ENCODE measurements at regions of chr13 and their contacts with region 1.

Region 1: GRCh38 chr13:45340926-45341750 is at the start of gene TPT1:
- DNase-seq: peak; percentile 99 to 100 (median 99)
- H3K4me3 ChIP-seq: peak within 1 kb of the TSS; percentile 90 to 94
- H3K4me3 Mint-ChIP-seq: peak within 1 kb of the TSS; percentile 92 to 100 (median 98)
- H3K27ac ChIP-seq: peak within 1 kb of the TSS; percentile 100
- H3K27ac Mint-ChIP-seq: peak within 1 kb of the TSS; percentile 80 to 100 (median 100)
- H3K4me1 ChIP-seq: peaks cover 55% of the 10 kb centered on the region
- H3K4me1 Mint-ChIP-seq: peaks cover 37 to 68% (median 50%) of the 10 kb centered on the region in 4 donors
- H3K27me3 ChIP-seq: no peaks in the 10 kb centered on the region
- H3K27me3 Mint-ChIP-seq: peaks cover 0 to 3% of the 10 kb centered on the region in 2 donors
- total RNA-seq, gene TPT1: 10,578 to 11,080 TPM

Region 2: DNA sequence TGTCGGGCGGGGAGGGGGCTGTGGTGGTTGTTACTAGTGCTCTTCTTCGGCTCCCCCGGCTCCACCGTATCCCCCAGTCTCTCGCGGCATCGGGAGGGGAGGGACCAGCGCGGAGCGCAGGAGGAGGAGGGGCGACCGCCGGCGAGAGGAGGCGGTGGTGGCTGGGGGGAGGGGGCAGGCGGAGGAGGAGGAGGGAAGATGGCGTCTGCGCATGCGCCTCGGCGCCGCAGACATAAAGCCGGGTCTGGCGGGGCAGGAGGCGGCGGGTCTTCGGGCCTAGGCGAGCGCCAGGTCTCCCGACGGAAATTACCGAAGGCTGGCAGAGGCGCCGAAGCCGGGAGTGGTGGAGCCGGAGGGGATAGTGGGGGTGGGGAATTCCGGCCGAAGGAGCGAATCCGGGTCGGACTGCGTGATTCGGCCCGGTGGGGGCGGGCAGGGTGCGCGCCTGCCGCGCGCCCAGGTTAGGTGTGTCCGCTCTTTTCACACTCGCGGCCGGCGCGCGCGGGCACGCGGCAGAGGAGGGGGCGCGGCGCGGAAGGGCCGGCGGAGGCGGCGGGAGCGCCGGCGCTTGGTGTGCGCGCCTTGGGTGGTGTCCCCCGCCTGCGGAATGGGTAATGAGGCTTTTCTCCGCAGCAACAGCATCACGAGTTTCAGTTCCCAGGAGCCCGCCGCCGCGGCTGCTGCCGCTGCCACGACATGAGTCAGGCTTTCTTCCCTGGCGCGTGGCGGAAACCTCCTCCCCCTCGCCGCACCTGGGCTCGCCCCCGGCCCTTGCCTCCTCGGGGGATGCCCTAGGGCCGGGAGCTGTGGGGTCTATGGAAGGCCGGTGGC is 763.7 kb before region 1 on chr13:
- CTCF ChIA-PET with region 1: no interaction called
- POLR2A ChIA-PET with region 1: interaction called, 3 read pairs
- intact Hi-C with region 1: loop called (anchors 1 kb)
- DNase-seq: peak; percentile 93 to 96 (median 94)
- H3K4me3 ChIP-seq: peak overlapping the region; percentile 47 to 86
- H3K4me3 Mint-ChIP-seq: peak overlapping the region; percentile 88 to 97 (median 94)
- H3K27ac ChIP-seq: peak overlapping the region; percentile 84
- H3K27ac Mint-ChIP-seq: peak overlapping the region; percentile 91 to 97 (median 95)
- H3K4me1 ChIP-seq: peaks cover 39% of the 10 kb centered on the region
- H3K4me1 Mint-ChIP-seq: peaks cover 28 to 46% (median 38%) of the 10 kb centered on the region in 4 donors
- H3K27me3 ChIP-seq: no peaks in the 10 kb centered on the region
- H3K27me3 Mint-ChIP-seq: no peaks in the 10 kb centered on the region

Region 3: GRCh38 chr13:45119991-45120864 is 220.9 kb before region 1 on chr13 and contains the start of gene GTF2F2:
- CTCF ChIA-PET with region 1: no interaction called
- POLR2A ChIA-PET with region 1: interaction called, 12 read pairs
- intact Hi-C with region 1: loop called (anchors 1 kb)
- DNase-seq: peak; percentile 86 to 89 (median 87)
- H3K4me3 ChIP-seq: peak within 1 kb of the TSS; percentile 83 to 88
- H3K4me3 Mint-ChIP-seq: no peak within 1 kb of the TSS
- H3K27ac ChIP-seq: peak within 1 kb of the TSS; percentile 90
- H3K27ac Mint-ChIP-seq: no peak within 1 kb of the TSS
- H3K4me1 ChIP-seq: peaks cover 28% of the 10 kb centered on the region
- H3K4me1 Mint-ChIP-seq: peaks cover 6 to 21% (median 11%) of the 10 kb centered on the region in 4 donors
- H3K27me3 ChIP-seq: no peaks in the 10 kb centered on the region
- H3K27me3 Mint-ChIP-seq: no peaks in the 10 kb centered on the region
- total RNA-seq, gene GTF2F2: 12.3 to 14.7 TPM

Region 4: DNA sequence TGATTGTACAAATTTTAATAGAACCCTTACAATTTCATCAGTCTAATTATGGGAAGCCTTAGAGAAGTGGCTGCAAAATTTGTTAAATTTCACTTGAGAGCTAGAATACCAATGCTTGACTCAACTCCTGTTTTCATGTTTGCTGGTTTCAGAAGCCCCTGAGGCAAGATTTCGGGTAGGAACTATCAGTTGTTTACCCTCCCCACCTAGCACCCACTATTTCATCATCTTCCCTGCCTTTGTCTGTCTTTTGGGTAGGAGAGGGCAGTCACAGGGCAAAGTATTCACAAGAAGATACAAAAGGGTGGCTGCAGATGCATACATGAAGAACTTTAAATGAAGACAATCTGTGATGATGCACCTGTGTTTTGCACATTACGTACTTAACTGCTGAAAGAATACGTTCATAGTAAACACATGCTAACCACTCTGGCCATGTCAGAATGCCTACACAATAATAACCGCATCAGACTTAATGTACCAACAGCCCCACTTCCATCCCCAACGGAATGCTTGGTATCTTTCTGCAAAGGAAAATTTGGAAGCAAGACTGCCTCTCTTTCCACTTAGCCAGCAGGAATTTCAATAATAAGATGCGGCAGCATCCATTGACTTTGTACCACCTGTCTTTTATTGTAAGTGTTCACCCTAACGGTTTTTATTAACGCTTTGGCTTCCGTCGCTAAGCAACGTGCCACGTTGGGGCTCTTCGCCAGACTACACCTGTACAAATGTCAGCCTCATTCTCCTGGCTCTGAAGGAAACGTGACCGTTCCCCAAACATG is 30.6 kb before region 1 on chr13:
- CTCF ChIA-PET with region 1: interaction called, 5 read pairs
- POLR2A ChIA-PET with region 1: interaction called, 7 read pairs
- intact Hi-C with region 1: loop called (anchors 1 kb)
- DNase-seq: no peak
- H3K4me3 ChIP-seq: peak overlapping the region; percentile 47 to 56
- H3K4me3 Mint-ChIP-seq: peak overlapping the region; percentile 88 to 94 (median 91)
- H3K27ac ChIP-seq: no peak overlapping the region
- H3K27ac Mint-ChIP-seq: peak overlapping the region in 3 of 7 donors; percentile 35 to 87 (median 36)
- H3K4me1 ChIP-seq: peaks cover 19% of the 10 kb centered on the region
- H3K4me1 Mint-ChIP-seq: peaks cover 12 to 22% (median 17%) of the 10 kb centered on the region in 4 donors
- H3K27me3 ChIP-seq: no peaks in the 10 kb centered on the region
- H3K27me3 Mint-ChIP-seq: peaks cover 3 to 5% of the 10 kb centered on the region in 2 donors

Region 5: DNA sequence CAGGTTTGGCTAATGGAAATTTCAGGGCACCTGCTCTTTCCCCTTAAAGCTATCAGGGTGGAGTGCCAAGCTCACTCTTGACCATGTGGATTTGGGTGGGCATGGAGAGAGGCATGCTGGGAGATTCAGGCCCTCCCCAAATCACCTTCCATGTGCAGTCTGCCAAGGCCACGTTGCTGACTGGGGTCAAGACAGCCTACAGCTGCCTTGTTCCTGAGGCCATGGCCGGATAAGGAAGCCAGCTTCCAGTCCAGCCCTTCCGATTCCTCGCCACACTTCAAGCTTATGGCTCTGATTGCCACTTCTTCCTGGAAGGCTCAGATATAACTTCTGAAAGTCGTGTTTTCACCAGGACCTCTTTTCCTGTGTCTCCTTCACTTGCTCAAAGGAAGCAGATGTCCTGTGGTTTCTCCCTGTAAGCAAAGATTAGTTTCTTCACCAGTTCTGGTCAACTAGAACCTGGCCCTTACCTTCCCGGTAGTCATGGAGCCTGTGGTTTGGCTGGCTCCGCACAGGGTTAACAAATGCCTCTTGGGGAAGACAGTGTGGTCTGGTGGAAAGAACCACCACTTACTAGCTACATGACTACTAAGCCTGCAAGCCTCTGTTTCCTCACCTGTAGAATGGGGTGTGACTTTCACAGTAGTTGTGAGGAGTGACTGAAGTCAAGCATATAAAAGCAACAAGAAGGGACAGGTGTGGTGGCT is 16.0 kb after region 1 on chr13:
- CTCF ChIA-PET with region 1: interaction called, 5 read pairs
- POLR2A ChIA-PET with region 1: interaction called, 219 read pairs
- intact Hi-C with region 1: no loop called
- DNase-seq: no peak
- H3K4me3 ChIP-seq: no peak overlapping the region
- H3K4me3 Mint-ChIP-seq: peak overlapping the region in 1 of 8 donors; percentile 17
- H3K27ac ChIP-seq: no peak overlapping the region
- H3K27ac Mint-ChIP-seq: peak overlapping the region in 6 of 7 donors; percentile 10 to 90 (median 74)
- H3K4me1 ChIP-seq: no peaks in the 10 kb centered on the region
- H3K4me1 Mint-ChIP-seq: peaks cover 6 to 22% (median 12%) of the 10 kb centered on the region in 4 donors
- H3K27me3 ChIP-seq: no peaks in the 10 kb centered on the region
- H3K27me3 Mint-ChIP-seq: no peaks in the 10 kb centered on the region

Region 6: GRCh38 chr13:45417790-45418534 is 76.8 kb after region 1 on chr13 and contains the start of gene SLC25A30:
- CTCF ChIA-PET with region 1: interaction called, 17 read pairs
- POLR2A ChIA-PET with region 1: interaction called, 44 read pairs
- intact Hi-C with region 1: loop called (anchors 1 kb)
- DNase-seq: peak; percentile 86 to 93 (median 88)
- H3K4me3 ChIP-seq: peak within 1 kb of the TSS; percentile 84 to 94
- H3K4me3 Mint-ChIP-seq: peak within 1 kb of the TSS; percentile 94 to 97 (median 96)
- H3K27ac ChIP-seq: peak within 1 kb of the TSS; percentile 79
- H3K27ac Mint-ChIP-seq: peak within 1 kb of the TSS; percentile 94 to 99 (median 96)
- H3K4me1 ChIP-seq: peaks cover 37% of the 10 kb centered on the region
- H3K4me1 Mint-ChIP-seq: peaks cover 15 to 38% (median 25%) of the 10 kb centered on the region in 4 donors
- H3K27me3 ChIP-seq: no peaks in the 10 kb centered on the region
- H3K27me3 Mint-ChIP-seq: peaks cover 0 to 2% of the 10 kb centered on the region in 2 donors
- total RNA-seq, gene SLC25A30: 21.4 to 22.0 TPM

Region 7: GRCh38 chr13:45718063-45718462 is 376.9 kb after region 1 on chr13:
- CTCF ChIA-PET with region 1: no interaction called
- POLR2A ChIA-PET with region 1: no interaction called
- intact Hi-C with region 1: no loop called
- DNase-seq: peak in 4 of 5 donors; percentile 6 to 12 (median 6)
- H3K4me3 ChIP-seq: no peak overlapping the region
- H3K4me3 Mint-ChIP-seq: no peak overlapping the region
- H3K27ac ChIP-seq: no peak overlapping the region
- H3K27ac Mint-ChIP-seq: no peak overlapping the region
- H3K4me1 ChIP-seq: no peaks in the 10 kb centered on the region
- H3K4me1 Mint-ChIP-seq: no peaks in the 10 kb centered on the region
- H3K27me3 ChIP-seq: no peaks in the 10 kb centered on the region
- H3K27me3 Mint-ChIP-seq: peaks cover 1 to 8% of the 10 kb centered on the region in 2 donors

Region 8: DNA sequence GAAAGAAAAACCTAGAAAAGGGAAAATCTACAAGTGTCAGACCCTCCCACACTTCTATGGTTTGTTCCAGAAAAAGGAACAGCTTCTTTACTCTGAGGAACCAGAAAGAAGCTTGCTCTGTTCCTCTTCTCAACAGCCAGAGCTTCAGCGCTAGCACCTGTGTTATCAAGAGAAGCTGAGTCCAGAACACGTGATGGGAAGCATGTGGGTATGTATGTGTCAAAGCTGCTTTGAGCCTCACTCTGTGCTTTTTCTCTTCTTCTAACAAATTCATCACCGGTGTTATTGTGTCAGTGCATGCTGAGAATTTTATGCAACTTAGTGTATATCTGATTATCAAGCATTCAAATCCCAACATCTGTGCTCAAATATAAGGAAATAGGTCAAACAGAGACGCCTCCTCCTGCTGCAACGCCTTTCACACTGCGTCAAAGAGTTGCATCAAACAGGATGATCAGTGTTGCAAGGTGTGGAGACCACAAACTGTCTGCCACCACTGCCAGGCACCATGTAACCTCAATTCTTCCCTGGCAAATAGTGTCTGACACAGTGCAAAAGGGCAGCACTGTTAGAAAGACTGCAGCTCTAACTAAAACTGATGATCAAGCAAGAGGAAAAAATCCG is 954.5 kb after region 1 on chr13:
- CTCF ChIA-PET with region 1: no interaction called
- POLR2A ChIA-PET with region 1: no interaction called
- intact Hi-C with region 1: loop called (anchors 5 kb)
- DNase-seq: peak; percentile 85 to 91 (median 86)
- H3K4me3 ChIP-seq: peak overlapping the region in 1 of 2 donors; percentile 26
- H3K4me3 Mint-ChIP-seq: peak overlapping the region; percentile 43 to 85 (median 75)
- H3K27ac ChIP-seq: peak overlapping the region; percentile 57
- H3K27ac Mint-ChIP-seq: peak overlapping the region; percentile 87 to 99 (median 96)
- H3K4me1 ChIP-seq: peaks cover 45% of the 10 kb centered on the region
- H3K4me1 Mint-ChIP-seq: peaks cover 38 to 65% (median 50%) of the 10 kb centered on the region in 4 donors
- H3K27me3 ChIP-seq: no peaks in the 10 kb centered on the region
- H3K27me3 Mint-ChIP-seq: no peaks in the 10 kb centered on the region

Measured in CD4-positive, alpha-beta memory T cell (primary cell).